ENCODE measurements at regions of chr10 and their contacts with region 1.

Region 1: DNA sequence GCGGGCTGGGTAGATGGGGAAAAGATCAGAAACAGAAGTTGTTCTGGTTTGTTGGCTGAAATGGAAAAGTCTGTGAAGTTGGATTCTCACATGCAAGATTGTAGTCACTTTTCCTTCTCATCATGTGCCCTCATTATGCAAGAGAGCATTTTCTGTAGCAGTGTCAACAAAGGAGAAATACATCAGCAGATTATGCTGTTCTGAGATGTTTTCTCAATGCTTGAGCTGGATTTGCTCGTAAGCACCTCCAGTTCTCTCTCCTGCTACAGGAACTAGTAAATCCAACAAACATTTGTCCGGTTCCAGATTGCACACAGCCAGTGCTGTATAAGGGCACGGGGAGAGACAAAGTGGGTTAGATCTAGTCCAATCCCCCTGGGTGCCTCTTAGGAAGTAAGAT is 90.0 kb downstream of the GATA3 start:
- DNase-seq: no peak
- H3K4me3 ChIP-seq: no peak overlapping the region
- H3K27ac ChIP-seq: no peak overlapping the region
- H3K4me1 ChIP-seq: peaks cover 0 to 6% of the 10 kb centered on the region in 2 experiments; a peak in 1 of 4 replicates
- H3K27me3 ChIP-seq: no peaks in the 10 kb centered on the region
- CTCF ChIP-seq: no peak
- EP300 ChIP-seq: no peak
- RAD21 ChIP-seq: no peak

Region 2: GRCh38 chr10:8133146-8133545 is 11.3 kb before region 1 on chr10:
- CTCF ChIA-PET with region 1: interaction called, 10 read pairs
- POLR2A ChIA-PET with region 1: no interaction called
- DNase-seq: no peak
- H3K4me3 ChIP-seq: no peak overlapping the region
- H3K27ac ChIP-seq: no peak overlapping the region
- H3K4me1 ChIP-seq: peaks cover under 1 to 3% of the 10 kb centered on the region in 2 experiments; a peak in 2 of 4 replicates
- H3K27me3 ChIP-seq: no peaks in the 10 kb centered on the region
- CTCF ChIP-seq: no peak
- EP300 ChIP-seq: no peak
- RAD21 ChIP-seq: no peak